K562 (cell line): ENCODE measurements at regions of chr19 and their contacts with region 1.

Region 1: DNA sequence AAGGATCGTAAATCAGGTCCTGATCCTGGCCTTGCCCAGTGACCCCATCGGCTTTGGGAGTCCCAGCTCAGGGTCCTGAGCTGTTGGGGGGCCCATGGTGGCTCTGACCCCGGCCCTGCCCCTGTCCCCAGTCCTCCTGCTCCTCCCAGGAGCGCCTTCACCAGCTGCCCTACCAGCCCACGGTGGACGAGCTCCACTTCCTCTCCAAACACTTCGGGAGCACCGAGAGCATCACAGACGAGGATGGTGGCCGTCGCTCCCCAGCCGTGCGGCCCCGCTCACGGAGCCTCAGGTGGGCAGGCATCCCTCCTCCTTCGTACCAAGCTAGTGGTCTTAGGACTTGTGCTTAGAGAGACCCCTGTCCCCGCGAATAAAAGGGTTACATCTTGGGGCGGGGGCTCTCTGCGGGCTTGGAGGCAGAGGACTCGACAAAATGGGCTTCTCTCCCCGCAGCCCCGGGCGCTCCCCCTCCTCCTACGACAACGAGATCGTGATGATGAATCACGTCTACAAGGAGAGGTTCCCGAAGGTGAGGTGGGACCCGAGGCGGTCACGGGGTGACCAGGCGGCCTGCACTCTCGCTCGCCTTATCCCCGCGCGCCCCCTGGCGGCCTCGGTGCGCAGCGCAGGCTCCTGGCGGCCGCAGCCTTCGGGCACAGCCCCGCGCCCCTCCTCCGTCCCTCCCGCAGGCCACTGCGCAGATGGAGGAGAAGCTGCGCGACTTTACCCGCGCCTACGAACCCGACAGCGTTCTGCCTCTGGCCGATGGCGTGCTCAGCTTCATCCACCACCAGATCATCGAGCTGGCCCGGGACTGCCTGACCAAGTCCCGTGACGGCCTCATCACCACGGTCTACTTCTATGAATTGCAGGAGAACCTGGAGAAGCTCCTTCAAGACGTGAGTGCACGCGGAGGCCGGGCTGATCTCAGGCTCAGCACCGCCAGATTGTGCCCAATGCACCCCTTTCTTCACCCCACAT is 9.1 kb downstream of the MAST1 start:
- DNase-seq: peak; percentile 88 to 93 (median 90)
- ATAC-seq: peak; percentile 100
- H3K4me3 ChIP-seq: no peak overlapping the region
- H3K27ac ChIP-seq: no peak overlapping the region
- H3K4me1 ChIP-seq: peaks cover 8 to 19% of the 10 kb centered on the region in 2 experiments; a peak in 4 of 5 replicates
- H3K27me3 ChIP-seq: no peaks in the 10 kb centered on the region
- CTCF ChIP-seq: peak; percentile 97 to 98 (median 97)
- EP300 ChIP-seq: peak; percentile 32; the same call in 1 of the 2 replicates
- POLR2A ChIP-seq: no peak
- RAD21 ChIP-seq: peak; percentile 93 to 98

Region 2: GRCh38 chr19:12716861-12717260 is 130.6 kb before region 1 on chr19:
- CTCF ChIA-PET with region 1: interaction called, 5 read pairs
- POLR2A ChIA-PET with region 1: no interaction called
- in situ Hi-C with region 1: no loop called
- intact Hi-C with region 1: loop called (anchors 2 kb)
- DNase-seq: peak in 2 of 4 experiments; percentile 64 to 80
- ATAC-seq: peak; percentile 77
- H3K4me3 ChIP-seq: no peak overlapping the region
- H3K27ac ChIP-seq: no peak overlapping the region
- H3K4me1 ChIP-seq: peaks cover 8 to 42% of the 10 kb centered on the region in 2 experiments; a peak in 3 of 5 replicates
- H3K27me3 ChIP-seq: no peaks in the 10 kb centered on the region
- CTCF ChIP-seq: peak; percentile 63 to 69 (median 63)
- EP300 ChIP-seq: no peak
- POLR2A ChIP-seq: no peak
- RAD21 ChIP-seq: peak; percentile 60 to 70

Region 3: GRCh38 chr19:12766051-12766521 is 81.4 kb before region 1 on chr19:
- CTCF ChIA-PET with region 1: interaction called, 3 read pairs
- POLR2A ChIA-PET with region 1: no interaction called
- in situ Hi-C with region 1: loop called (anchors 5 kb)
- intact Hi-C with region 1: no loop called
- DNase-seq: peak; percentile 44 to 72 (median 54)
- ATAC-seq: peak; percentile 95
- H3K4me3 ChIP-seq: peak overlapping the region; percentile 41
- H3K27ac ChIP-seq: no peak overlapping the region
- H3K4me1 ChIP-seq: peaks cover 0 to 29% of the 10 kb centered on the region in 2 experiments; a peak in 2 of 5 replicates
- H3K27me3 ChIP-seq: no peaks in the 10 kb centered on the region
- CTCF ChIP-seq: peak; percentile 51 to 92 (median 58); a peak in 5 of 6 replicates
- EP300 ChIP-seq: no peak
- POLR2A ChIP-seq: no peak
- RAD21 ChIP-seq: peak; percentile 18 to 60; a peak in 2 of 4 replicates